ENCODE measurements at regions of chr2 and their contacts with region 1.

Region 1: GRCh38 chr2:43131024-43131889 is 95.1 kb downstream of the ZFP36L2 start:
- DNase-seq: peak; percentile 94 to 97
- H3K4me3 ChIP-seq: peak overlapping the region; percentile 22; the same call in 1 of the 2 replicates
- H3K27ac ChIP-seq: peak overlapping the region; percentile 66
- H3K4me1 ChIP-seq: peaks cover 55% of the 10 kb centered on the region
- H3K27me3 ChIP-seq: no peaks in the 10 kb centered on the region
- CTCF ChIP-seq: peak; percentile 88

Region 2: DNA sequence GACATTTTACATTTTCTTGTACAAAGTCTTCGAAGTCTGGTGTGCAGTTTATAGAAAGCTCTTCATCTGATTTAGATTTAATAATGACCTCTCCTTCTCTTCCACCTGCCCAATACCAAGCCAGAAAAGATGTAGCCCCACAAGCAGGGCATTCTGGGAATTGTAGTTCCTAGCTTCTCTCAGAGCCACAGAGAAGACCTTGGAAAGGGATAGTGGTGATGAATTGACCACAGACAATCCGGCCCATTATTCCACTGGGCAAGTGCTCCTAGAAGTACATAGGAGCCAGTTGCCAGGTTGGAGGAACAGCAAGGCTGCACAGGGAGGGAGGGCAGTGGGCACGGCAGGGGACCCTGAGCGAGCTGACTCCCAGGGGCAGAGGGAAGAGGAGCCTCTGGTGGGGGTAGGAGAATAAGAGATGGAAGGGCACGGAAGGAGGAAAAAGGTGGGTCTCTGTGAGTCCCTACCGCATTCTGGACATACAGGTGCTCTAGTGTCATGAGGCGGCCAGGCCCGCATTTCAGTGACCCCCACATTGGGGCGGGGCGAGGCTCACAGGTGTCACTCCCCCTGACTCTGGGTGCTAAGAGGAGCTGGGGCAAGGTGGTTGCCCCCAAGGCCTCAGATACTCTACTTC is 186.4 kb before region 1 on chr2:
- CTCF ChIA-PET with region 1: no interaction called
- POLR2A ChIA-PET with region 1: no interaction called
- intact Hi-C with region 1: loop called (anchors 1 kb)
- DNase-seq: no peak
- H3K4me3 ChIP-seq: no peak overlapping the region
- H3K27ac ChIP-seq: no peak overlapping the region
- H3K4me1 ChIP-seq: peaks cover 3% of the 10 kb centered on the region; the same call in 1 of the 2 replicates
- H3K27me3 ChIP-seq: no peaks in the 10 kb centered on the region
- CTCF ChIP-seq: no peak

Region 3: DNA sequence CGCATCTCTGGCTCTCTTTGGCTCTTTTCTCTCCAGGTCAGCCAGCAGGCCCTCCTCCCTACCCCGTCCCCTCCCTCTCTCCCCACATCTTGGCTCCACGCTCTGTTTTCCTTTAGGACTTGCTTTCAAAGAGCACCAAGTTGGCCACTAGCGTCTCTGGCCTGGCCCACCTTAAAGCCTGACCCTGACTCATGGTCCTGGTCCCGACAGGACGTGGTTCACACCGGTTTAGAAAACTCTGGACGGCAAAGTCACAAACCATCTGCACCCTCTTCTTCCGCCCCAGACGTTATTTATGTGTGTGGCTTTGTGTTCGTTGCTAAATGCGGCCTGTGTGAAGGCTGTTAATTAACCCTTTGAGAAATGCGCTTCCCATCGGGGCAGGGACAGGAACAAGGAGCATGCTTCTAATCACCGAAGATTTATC is 169.9 kb before region 1 on chr2:
- CTCF ChIA-PET with region 1: no interaction called
- POLR2A ChIA-PET with region 1: no interaction called
- intact Hi-C with region 1: no loop called
- DNase-seq: no peak
- H3K4me3 ChIP-seq: no peak overlapping the region
- H3K27ac ChIP-seq: no peak overlapping the region
- H3K4me1 ChIP-seq: peaks cover 73% of the 10 kb centered on the region
- H3K27me3 ChIP-seq: no peaks in the 10 kb centered on the region
- CTCF ChIP-seq: no peak

Region 4: DNA sequence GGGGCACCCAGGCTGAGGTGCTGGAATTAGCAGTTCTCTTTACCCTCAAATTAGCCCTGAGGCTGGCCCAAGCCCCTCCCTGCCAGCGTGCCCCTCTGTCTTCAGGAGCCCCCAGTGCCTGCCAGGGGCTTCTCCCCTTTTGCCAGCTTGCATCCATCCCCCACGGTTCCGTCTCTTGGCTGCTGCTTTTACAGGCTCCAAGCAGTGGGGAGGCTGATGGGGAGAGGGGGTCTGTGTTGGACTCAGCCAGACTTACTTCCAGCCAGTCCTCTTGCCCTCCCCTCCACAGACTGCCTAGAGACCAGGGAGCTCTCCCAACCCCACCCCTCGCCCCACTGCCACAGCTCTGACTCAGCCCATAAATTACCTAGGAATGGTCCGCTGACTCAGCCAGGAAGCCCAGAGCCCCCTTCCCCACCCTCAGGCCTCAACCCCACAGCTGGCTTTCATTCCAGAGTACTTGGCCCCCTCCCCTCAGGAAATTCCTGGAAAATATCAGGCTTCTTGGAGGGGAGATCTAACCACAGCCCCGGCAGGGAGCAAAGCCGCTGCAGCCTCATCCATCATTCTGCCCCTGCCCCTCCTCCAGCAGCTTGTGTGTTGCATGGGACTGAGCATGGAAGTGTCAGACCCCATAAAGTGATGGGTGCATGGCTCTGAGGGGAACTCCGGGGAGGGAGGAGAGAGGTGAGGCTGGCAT is 89.4 kb before region 1 on chr2:
- CTCF ChIA-PET with region 1: no interaction called
- POLR2A ChIA-PET with region 1: no interaction called
- intact Hi-C with region 1: loop called (anchors 1 kb)
- DNase-seq: peak; percentile 93 to 95
- H3K4me3 ChIP-seq: peak overlapping the region; percentile 19; the same call in 1 of the 2 replicates
- H3K27ac ChIP-seq: peak overlapping the region; percentile 90
- H3K4me1 ChIP-seq: peaks cover 79% of the 10 kb centered on the region
- H3K27me3 ChIP-seq: no peaks in the 10 kb centered on the region
- CTCF ChIP-seq: no peak

Region 5: GRCh38 chr2:43142921-43143438 is 11.7 kb after region 1 on chr2:
- CTCF ChIA-PET with region 1: interaction called, 14 read pairs
- POLR2A ChIA-PET with region 1: no interaction called
- intact Hi-C with region 1: no loop called
- DNase-seq: peak in 1 of 2 experiments; percentile 37
- H3K4me3 ChIP-seq: no peak overlapping the region
- H3K27ac ChIP-seq: 0 out of 2 replicates have a peak overlapping the region, but pooled peaks have one; percentile 4
- H3K4me1 ChIP-seq: peaks cover 39% of the 10 kb centered on the region
- H3K27me3 ChIP-seq: no peaks in the 10 kb centered on the region
- CTCF ChIP-seq: peak; percentile 48; the same call in 1 of the 2 replicates

Region 6: GRCh38 chr2:43219383-43220228 is 88.3 kb after region 1 on chr2:
- CTCF ChIA-PET with region 1: interaction called, 10 read pairs
- POLR2A ChIA-PET with region 1: no interaction called
- intact Hi-C with region 1: loop called (anchors 1 kb)
- DNase-seq: peak; percentile 81 to 91
- H3K4me3 ChIP-seq: peak overlapping the region; percentile 72
- H3K27ac ChIP-seq: peak overlapping the region; percentile 92
- H3K4me1 ChIP-seq: peaks cover 51% of the 10 kb centered on the region
- H3K27me3 ChIP-seq: no peaks in the 10 kb centered on the region
- CTCF ChIP-seq: no peak; the same call in 1 of the 2 replicates

Region 7: DNA sequence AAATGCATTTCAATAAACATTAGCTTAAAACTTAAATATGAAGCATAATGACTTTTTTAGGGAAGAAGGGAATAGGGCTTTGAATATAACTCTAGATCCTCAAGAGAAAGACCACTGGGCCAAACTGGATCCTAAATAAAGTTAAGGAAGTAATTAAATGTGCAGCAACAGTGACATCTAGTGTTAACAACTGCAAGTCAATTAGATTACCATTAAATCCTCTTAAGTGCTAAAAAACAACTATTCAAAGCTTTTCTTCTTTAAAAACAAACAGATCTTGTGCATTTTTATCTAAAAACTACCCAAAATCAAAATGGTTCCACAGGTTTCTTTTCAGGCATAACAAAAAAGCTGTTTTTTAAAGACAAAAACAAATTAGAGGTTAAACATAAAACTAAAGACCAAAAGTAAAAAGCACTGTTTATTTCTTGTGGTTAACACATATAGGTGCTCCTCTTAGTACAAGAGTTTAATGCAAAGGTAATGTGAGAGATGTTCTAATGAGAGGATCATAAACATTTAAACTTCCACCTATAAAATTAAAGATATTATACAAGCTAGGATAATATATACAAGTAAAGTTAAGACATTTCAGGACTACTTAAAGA is 353.2 kb after region 1 on chr2:
- CTCF ChIA-PET with region 1: interaction called, 6 read pairs
- POLR2A ChIA-PET with region 1: no interaction called
- intact Hi-C with region 1: loop called (anchors 1 kb)
- DNase-seq: peak in 1 of 2 experiments; percentile 78
- H3K4me3 ChIP-seq: no peak overlapping the region
- H3K27ac ChIP-seq: no peak overlapping the region; the same call in 1 of the 2 replicates
- H3K4me1 ChIP-seq: peaks cover 13% of the 10 kb centered on the region
- H3K27me3 ChIP-seq: no peaks in the 10 kb centered on the region
- CTCF ChIP-seq: peak; percentile 93